Natural killer cell (primary cell): ENCODE measurements at regions of chr21 and their contacts with region 1.

Region 1: DNA sequence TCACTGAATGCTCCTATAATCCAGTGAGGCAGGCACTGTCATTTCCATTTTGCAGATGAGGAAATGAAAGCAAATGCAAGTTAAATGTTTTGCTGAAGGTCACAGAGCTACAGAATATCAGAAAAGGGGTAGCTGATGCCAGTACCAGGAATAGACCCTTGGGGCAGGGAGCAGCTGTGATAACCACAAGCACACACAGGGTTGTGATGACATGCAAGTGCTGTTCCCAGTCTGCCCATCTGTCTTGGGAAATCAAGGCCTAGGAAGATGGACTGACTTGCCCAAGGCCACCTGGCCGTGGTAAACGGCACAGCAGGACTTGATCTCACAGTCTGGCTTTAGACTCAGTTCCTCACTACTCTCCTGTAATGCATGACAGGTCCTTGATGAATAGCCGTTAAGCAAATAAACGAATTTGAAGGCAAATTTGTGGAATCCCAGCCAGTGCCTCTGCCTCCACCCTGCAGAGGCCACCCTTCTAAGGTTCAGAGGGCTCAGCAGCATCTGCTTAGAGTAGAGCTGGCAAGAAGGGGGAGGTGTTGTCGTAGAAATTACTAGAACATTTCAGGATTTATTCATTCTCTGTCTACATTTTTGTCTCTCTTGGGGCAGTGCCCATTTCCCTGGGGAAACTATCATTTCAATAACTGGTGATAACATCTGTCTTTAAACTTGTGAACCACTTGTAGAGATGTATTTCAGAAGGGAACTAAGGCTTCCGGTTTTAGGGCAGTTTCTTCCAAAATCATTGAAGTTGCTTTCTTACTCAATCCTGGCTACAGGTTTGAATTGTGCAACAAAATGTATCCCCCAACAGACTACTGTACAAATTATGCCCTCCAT is 53.2 kb upstream of the MRPS6 start:
- DNase-seq: no peak
- ATAC-seq: no peak
- H3K4me3 ChIP-seq: no peak overlapping the region
- H3K4me3 Mint-ChIP-seq: peak overlapping the region; percentile 66
- H3K27ac ChIP-seq: peak overlapping the region; percentile 44
- H3K27ac Mint-ChIP-seq: no peak overlapping the region
- H3K4me1 ChIP-seq: peaks cover 57% of the 10 kb centered on the region
- H3K4me1 Mint-ChIP-seq: peaks cover 0 to 45% of the 10 kb centered on the region in 2 donors
- H3K27me3 ChIP-seq: no peaks in the 10 kb centered on the region
- H3K27me3 Mint-ChIP-seq: no peaks in the 10 kb centered on the region
- CTCF ChIP-seq: no peak

Region 2: GRCh38 chr21:33542640-33543504 is 477.4 kb before region 1 on chr21 and contains the start of gene SON:
- intact Hi-C with region 1: no loop called
- DNase-seq: peak; percentile 95 to 99
- ATAC-seq: peak; percentile 85 to 97 (median 88)
- H3K4me3 ChIP-seq: peak within 1 kb of the TSS; percentile 92
- H3K4me3 Mint-ChIP-seq: peak within 1 kb of the TSS; percentile 99
- H3K27ac ChIP-seq: peak within 1 kb of the TSS; percentile 99
- H3K27ac Mint-ChIP-seq: peak within 1 kb of the TSS; percentile 98 to 100
- H3K4me1 ChIP-seq: peaks cover 6% of the 10 kb centered on the region
- H3K4me1 Mint-ChIP-seq: peaks cover 47 to 53% of the 10 kb centered on the region in 2 donors
- H3K27me3 ChIP-seq: no peaks in the 10 kb centered on the region
- H3K27me3 Mint-ChIP-seq: no peaks in the 10 kb centered on the region
- CTCF ChIP-seq: no peak
- total RNA-seq, gene SON: 348 to 442 (median 416) TPM

Region 3: GRCh38 chr21:33901412-33902288 is 118.6 kb before region 1 on chr21:
- intact Hi-C with region 1: no loop called
- DNase-seq: peak in 1 of 2 donors; percentile 18
- ATAC-seq: no peak
- H3K4me3 ChIP-seq: no peak overlapping the region
- H3K4me3 Mint-ChIP-seq: no peak overlapping the region
- H3K27ac ChIP-seq: no peak overlapping the region
- H3K27ac Mint-ChIP-seq: peak overlapping the region in 1 of 2 donors; percentile 36
- H3K4me1 ChIP-seq: no peaks in the 10 kb centered on the region
- H3K4me1 Mint-ChIP-seq: no peaks in the 10 kb centered on the region
- H3K27me3 ChIP-seq: no peaks in the 10 kb centered on the region
- H3K27me3 Mint-ChIP-seq: no peaks in the 10 kb centered on the region
- CTCF ChIP-seq: no peak

Region 4: DNA sequence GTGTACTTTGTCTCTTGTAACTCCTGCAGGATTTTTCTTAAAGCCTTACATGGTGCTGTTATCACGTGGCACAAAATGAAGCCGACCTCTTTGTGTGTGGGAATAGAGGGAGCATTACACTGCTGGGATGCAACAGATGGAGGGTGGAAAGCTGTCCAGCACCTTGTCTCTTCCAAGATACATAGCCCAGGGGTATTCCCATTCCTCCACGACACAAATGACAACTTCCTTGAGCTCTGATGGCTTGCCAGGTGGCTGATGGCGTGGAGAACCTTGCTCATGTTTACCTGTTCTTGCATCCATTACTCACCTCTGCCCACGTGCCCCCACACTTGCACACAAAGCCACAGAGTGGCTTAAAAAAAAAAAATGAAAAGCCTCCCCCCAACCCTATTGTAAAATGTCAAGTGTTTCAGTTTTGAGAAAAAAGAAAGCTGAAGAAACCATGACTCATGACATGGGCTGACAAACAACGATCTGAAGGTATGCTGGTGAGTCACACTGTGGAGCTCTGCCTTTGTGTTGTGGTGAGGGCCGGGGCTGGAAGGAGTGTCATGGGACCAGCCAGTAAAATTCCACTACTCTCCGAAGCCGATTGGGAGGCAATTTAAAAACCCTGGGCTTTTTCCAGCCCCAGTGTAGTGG is 72.7 kb before region 1 on chr21:
- intact Hi-C with region 1: loop called (anchors 1 kb)
- DNase-seq: peak; percentile 75 to 95
- ATAC-seq: peak; percentile 47 to 76 (median 63)
- H3K4me3 ChIP-seq: peak overlapping the region; percentile 6
- H3K4me3 Mint-ChIP-seq: peak overlapping the region; percentile 76
- H3K27ac ChIP-seq: peak overlapping the region; percentile 98
- H3K27ac Mint-ChIP-seq: peak overlapping the region; percentile 96 to 99
- H3K4me1 ChIP-seq: peaks cover 58% of the 10 kb centered on the region
- H3K4me1 Mint-ChIP-seq: peaks cover 63 to 72% of the 10 kb centered on the region in 2 donors
- H3K27me3 ChIP-seq: no peaks in the 10 kb centered on the region
- H3K27me3 Mint-ChIP-seq: no peaks in the 10 kb centered on the region
- CTCF ChIP-seq: no peak

Region 5: DNA sequence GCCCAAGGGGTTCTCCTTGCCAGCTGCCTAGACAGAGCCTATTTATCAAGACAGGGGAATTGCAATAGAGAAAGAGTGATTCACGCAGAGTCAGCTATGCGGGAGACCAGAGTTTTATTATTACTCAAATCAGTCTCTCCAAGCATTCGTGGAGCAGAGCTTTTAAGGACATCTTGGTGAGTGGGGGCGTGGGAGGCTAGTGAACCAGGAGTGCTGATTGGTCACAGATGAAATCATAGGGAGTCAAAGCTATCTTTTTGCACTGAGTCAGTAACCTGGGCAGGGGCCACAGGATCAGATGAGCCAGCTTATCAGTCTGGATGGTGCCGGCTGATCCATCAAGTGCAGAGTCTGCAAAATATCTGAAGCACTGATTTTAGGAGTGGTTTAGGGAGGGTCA is 11.6 kb before region 1 on chr21:
- intact Hi-C with region 1: loop called (anchors 2 kb)
- DNase-seq: no peak
- ATAC-seq: no peak
- H3K4me3 ChIP-seq: no peak overlapping the region
- H3K4me3 Mint-ChIP-seq: no peak overlapping the region
- H3K27ac ChIP-seq: peak overlapping the region; percentile 57
- H3K27ac Mint-ChIP-seq: peak overlapping the region; percentile 91
- H3K4me1 ChIP-seq: peaks cover 18% of the 10 kb centered on the region
- H3K4me1 Mint-ChIP-seq: peaks cover 23 to 29% of the 10 kb centered on the region in 2 donors
- H3K27me3 ChIP-seq: no peaks in the 10 kb centered on the region
- H3K27me3 Mint-ChIP-seq: no peaks in the 10 kb centered on the region
- CTCF ChIP-seq: no peak

Region 6: GRCh38 chr21:34078915-34079314 is 58.7 kb after region 1 on chr21:
- intact Hi-C with region 1: loop called (anchors 2 kb)
- DNase-seq: peak in 1 of 2 donors; percentile 51
- ATAC-seq: peak; percentile 40 to 62 (median 44)
- H3K4me3 ChIP-seq: no peak overlapping the region
- H3K4me3 Mint-ChIP-seq: peak overlapping the region; percentile 80
- H3K27ac ChIP-seq: no peak overlapping the region
- H3K27ac Mint-ChIP-seq: peak overlapping the region; percentile 54 to 89
- H3K4me1 ChIP-seq: peaks cover 26% of the 10 kb centered on the region
- H3K4me1 Mint-ChIP-seq: peaks cover 94% of the 10 kb centered on the region in 2 donors
- H3K27me3 ChIP-seq: no peaks in the 10 kb centered on the region
- H3K27me3 Mint-ChIP-seq: no peaks in the 10 kb centered on the region
- CTCF ChIP-seq: no peak

Region 7: DNA sequence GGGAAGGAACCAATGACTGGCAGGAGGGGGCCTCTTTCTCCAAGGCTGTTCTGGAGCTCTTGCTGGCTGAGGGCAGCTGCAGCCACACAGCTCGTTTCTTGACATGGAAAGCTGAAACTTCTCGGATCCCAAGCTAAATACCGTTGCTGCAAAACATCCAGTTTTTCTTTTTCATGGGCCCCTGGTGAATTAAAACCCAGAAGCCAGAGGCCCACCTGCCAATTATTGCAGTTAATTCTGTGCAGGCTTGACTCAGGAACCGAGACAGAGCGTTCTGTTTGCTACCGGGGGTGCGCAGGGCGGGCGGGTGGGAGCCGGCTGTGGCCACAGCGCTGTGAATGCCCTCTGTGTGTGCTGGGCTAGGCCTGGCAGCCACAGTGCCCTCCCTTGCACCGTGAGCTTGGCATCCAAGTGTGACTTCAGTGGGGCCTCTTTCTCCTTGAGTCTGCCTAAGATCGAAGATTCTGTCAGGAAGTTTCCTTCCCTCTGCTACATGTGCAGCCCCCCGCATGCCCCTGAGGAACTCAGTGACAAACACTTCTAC is 323.7 kb after region 1 on chr21:
- intact Hi-C with region 1: loop called (anchors 5 kb)
- DNase-seq: no peak
- ATAC-seq: no peak
- H3K4me3 ChIP-seq: no peak overlapping the region
- H3K4me3 Mint-ChIP-seq: no peak overlapping the region
- H3K27ac ChIP-seq: no peak overlapping the region
- H3K27ac Mint-ChIP-seq: no peak overlapping the region
- H3K4me1 ChIP-seq: peaks cover 9% of the 10 kb centered on the region
- H3K4me1 Mint-ChIP-seq: peaks cover 25 to 26% of the 10 kb centered on the region in 2 donors
- H3K27me3 ChIP-seq: no peaks in the 10 kb centered on the region
- H3K27me3 Mint-ChIP-seq: peaks cover 0 to 3% of the 10 kb centered on the region in 2 donors
- CTCF ChIP-seq: no peak